ENCODE measurements at regions of chr3 and their contacts with region 1.

Region 1: GRCh38 chr3:30693470-30694120 is 87.2 kb downstream of the TGFBR2 start:
- DNase-seq: peak in 2 of 10 donors; percentile 34 to 42
- H3K4me3 ChIP-seq: no peak overlapping the region
- H3K27ac ChIP-seq: peak overlapping the region in 5 of 59 donors; percentile 6 to 65 (median 34)
- H3K27me3 ChIP-seq: no peaks in the 10 kb centered on the region
- CTCF ChIP-seq: peak; percentile 72 to 94 (median 86)

Region 2: DNA sequence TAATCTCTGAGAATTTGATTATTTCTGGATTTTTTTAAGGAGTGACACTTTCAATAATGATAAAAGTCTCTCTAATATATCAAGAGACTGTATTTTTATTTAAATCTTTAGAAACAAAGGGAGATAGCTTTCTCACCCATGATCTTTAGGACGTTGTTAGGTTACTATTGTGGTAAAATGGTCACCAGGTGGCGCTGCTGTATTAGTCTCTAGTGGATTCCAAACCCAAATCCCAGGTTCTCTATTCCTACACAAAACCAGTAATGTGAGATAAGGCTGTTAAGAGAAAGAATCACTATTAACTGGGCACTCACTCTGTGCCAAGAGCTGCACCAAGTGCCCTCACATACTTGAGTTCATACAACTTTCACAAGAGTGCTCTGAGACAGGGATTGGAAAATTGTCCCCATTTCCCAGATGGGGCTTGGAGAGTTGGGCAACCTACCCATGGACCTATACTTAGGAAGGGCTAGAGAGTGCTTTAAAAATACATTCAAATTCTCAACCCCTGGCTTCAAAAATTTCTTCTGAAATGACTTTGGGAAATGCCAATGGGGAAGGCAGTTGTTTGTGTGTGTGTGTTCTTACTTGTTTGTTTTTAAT is 680.6 kb before region 1 on chr3:
- intact Hi-C with region 1: loop called in 1 of 2 experiments (anchors 10 kb)
- DNase-seq: peak in 7 of 10 donors; percentile 24 to 78 (median 47)
- H3K4me3 ChIP-seq: no peak overlapping the region
- H3K27ac ChIP-seq: no peak overlapping the region
- H3K27me3 ChIP-seq: peaks cover 0 to 4% (median 0%) of the 10 kb centered on the region in 45 donors
- CTCF ChIP-seq: peak; percentile 50 to 85 (median 72)

Region 3: DNA sequence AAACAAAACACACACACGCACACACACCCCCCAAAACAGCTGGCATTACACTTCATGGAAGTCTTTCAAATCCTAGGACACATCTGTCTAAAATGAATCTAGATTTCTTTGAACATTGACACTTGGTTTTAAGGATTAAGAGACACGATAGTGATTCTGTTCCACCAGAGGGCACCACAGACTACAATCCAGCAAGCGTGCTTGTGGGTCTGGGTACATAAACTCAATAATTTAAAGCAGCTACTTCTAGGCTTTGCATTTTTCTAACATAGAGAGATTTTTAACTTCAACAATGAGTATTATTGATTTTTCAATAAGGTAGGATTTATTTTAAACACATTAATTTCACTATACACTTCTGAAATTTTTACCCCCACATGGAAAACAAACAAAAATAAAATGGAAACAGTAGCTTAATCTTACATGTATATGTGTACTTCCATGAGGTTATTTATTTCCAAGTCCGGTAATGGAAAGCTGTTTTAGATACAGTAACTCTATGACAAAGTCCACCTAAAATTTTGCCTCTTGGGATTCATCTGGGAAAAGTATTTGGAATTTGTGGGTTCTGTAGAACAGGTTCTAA is 651.2 kb before region 1 on chr3:
- intact Hi-C with region 1: loop called (anchors 2 to 10 kb)
- DNase-seq: peak in 9 of 10 donors; percentile 18 to 78 (median 50)
- H3K4me3 ChIP-seq: no peak overlapping the region
- H3K27ac ChIP-seq: no peak overlapping the region
- H3K27me3 ChIP-seq: peaks cover 0 to 18% (median 0%) of the 10 kb centered on the region in 45 donors
- CTCF ChIP-seq: peak; percentile 54 to 92 (median 78)

Region 4: GRCh38 chr3:30112902-30113484 is 580.6 kb before region 1 on chr3:
- intact Hi-C with region 1: loop called (anchors 2 to 10 kb)
- DNase-seq: no peak
- H3K4me3 ChIP-seq: no peak overlapping the region
- H3K27ac ChIP-seq: no peak overlapping the region
- H3K27me3 ChIP-seq: peaks cover 0 to 10% (median 0%) of the 10 kb centered on the region in 45 donors
- CTCF ChIP-seq: peak; percentile 59 to 90 (median 78)

Region 5: GRCh38 chr3:30199096-30199759 is 494.4 kb before region 1 on chr3:
- intact Hi-C with region 1: loop called in 1 of 2 experiments (anchors 2 kb)
- DNase-seq: peak; percentile 21 to 82 (median 70)
- H3K4me3 ChIP-seq: no peak overlapping the region
- H3K27ac ChIP-seq: no peak overlapping the region
- H3K27me3 ChIP-seq: peaks cover 0 to 1% (median 0%) of the 10 kb centered on the region in 45 donors
- CTCF ChIP-seq: peak; percentile 72 to 98 (median 91)

Region 6: GRCh38 chr3:30448450-30449289 is 244.9 kb before region 1 on chr3:
- intact Hi-C with region 1: loop called in 1 of 2 experiments (anchors 5 kb)
- DNase-seq: no peak
- H3K4me3 ChIP-seq: no peak overlapping the region
- H3K27ac ChIP-seq: peak overlapping the region in 38 of 59 donors; percentile 1 to 76 (median 51)
- H3K27me3 ChIP-seq: no peaks in the 10 kb centered on the region
- CTCF ChIP-seq: no peak